ENCODE measurements at regions of chr6 and their contacts with region 1.

Region 1: GRCh38 chr6:32984605-32985389 is 16.4 kb downstream of the BRD2 start:
- DNase-seq: peak; percentile 74
- ATAC-seq: peak; percentile 90
- H3K4me3 Mint-ChIP-seq: no peak overlapping the region
- H3K27ac Mint-ChIP-seq: peak overlapping the region; percentile 73
- H3K4me1 Mint-ChIP-seq: peaks cover 32% of the 10 kb centered on the region
- H3K27me3 Mint-ChIP-seq: no peaks in the 10 kb centered on the region
- CTCF ChIP-seq: no peak

Region 2: GRCh38 chr6:32402812-32403211 is 582.0 kb before region 1 on chr6:
- CTCF ChIA-PET with region 1: no interaction called
- POLR2A ChIA-PET with region 1: no interaction called
- intact Hi-C with region 1: loop called (anchors 5 kb)
- DNase-seq: no peak
- ATAC-seq: no peak
- H3K4me3 Mint-ChIP-seq: no peak overlapping the region
- H3K27ac Mint-ChIP-seq: no peak overlapping the region
- H3K4me1 Mint-ChIP-seq: peaks cover 9% of the 10 kb centered on the region
- H3K27me3 Mint-ChIP-seq: peaks cover 2% of the 10 kb centered on the region
- CTCF ChIP-seq: no peak

Region 3: DNA sequence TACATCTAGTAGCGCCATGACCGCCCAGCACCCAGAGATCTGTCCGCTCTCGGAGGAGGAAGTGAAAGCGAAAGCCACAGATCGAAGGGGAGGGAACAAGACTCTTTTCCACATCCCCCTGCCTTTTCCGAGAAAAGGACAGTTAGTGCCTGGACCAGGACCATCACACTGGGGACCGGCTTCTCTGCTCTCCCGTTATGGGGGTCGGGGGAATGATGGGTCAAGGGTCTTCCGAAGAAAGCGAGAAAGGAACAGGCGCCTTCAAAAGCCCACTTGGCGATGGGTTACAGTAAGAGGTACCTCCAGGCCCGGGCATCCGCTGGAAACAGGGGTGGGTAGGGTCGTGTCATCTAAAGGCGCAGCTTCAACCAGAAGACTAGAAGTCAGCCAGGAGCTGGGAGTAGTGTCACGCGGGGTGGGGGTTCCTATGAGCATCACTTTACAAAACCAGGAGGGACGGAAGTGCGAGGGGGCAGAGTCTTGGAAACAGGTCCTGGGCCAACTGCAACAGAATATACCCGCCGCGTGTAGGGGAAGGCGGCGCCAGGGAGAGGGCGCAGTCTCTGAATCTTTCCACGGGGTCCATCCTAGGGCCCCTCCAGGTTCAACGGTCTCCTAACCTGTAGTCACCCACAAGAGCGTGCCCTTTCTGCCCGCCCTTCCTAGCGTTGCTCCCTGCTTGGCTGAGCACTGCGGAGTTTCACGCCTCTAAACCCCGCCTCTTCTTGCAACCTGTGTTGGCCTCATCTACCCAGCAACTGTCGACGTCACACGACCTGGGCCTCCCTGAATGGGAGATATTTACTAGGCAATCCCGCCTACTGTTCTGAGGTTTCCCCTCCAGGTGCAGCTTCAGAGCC is 140.6 kb before region 1 on chr6 and contains the start of gene PSMB8:
- CTCF ChIA-PET with region 1: interaction called, 23 read pairs
- POLR2A ChIA-PET with region 1: interaction called, 13 read pairs
- intact Hi-C with region 1: no loop called
- DNase-seq: peak; percentile 96
- ATAC-seq: peak; percentile 78
- H3K4me3 Mint-ChIP-seq: peak within 1 kb of the TSS; percentile 99
- H3K27ac Mint-ChIP-seq: peak within 1 kb of the TSS; percentile 100
- H3K4me1 Mint-ChIP-seq: peaks cover 92% of the 10 kb centered on the region
- H3K27me3 Mint-ChIP-seq: no peaks in the 10 kb centered on the region
- CTCF ChIP-seq: no peak
- total RNA-seq, gene PSMB8: 182 and 194 TPM in 2 replicates

Region 4: GRCh38 chr6:32879691-32880090 is 105.1 kb before region 1 on chr6:
- CTCF ChIA-PET with region 1: interaction called, 151 read pairs
- POLR2A ChIA-PET with region 1: interaction called, 21 read pairs
- intact Hi-C with region 1: no loop called
- DNase-seq: no peak
- ATAC-seq: peak; percentile 21
- H3K4me3 Mint-ChIP-seq: peak overlapping the region; percentile 73
- H3K27ac Mint-ChIP-seq: no peak overlapping the region
- H3K4me1 Mint-ChIP-seq: peaks cover 17% of the 10 kb centered on the region
- H3K27me3 Mint-ChIP-seq: peaks cover 4% of the 10 kb centered on the region
- CTCF ChIP-seq: no peak

Region 5: DNA sequence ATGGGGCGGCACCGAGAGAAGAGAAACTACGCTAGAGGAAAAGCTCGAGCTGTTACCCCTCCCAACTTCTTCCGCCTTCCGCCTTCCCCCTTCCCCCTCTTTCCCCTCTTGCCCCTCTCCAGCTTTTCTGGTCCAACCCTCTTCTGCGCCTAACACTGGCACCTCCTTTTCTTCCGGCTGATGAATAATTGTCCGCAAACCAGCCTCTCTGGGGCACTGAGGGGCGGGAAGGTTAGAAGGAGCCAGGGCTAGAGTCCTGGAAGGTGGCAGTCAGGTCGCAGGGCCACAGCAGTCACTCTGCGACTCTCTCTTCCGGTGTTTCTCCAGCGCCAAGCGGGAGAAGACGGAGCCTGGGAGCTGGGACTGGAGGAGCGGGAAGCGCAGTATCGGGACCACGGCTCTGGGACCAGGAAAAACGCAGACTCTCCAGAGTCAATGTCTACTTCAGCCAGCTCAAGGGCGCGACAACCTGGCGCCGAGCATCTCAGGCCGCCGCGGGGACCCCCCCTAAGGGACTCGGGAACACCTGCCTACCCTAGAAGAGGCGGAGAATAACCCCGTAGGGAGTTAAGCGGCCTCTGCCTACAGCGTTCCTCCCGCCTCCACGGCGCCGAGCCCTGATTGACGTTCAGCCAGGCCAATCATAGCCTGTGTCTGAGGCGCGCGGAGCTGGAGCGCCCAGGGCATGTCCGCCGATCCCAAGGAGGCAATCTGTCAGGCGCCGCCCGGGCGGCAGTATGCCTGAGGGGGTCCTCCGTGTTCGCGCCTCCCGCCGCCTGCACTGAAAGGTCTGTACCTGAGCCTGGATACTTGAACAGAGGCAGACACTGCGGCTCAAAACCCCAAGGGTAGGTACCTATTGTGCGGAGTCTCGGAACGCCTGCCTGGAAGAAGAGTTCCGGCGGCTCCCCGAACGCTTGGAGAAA is 90.5 kb before region 1 on chr6:
- CTCF ChIA-PET with region 1: interaction called, 151 read pairs
- POLR2A ChIA-PET with region 1: interaction called, 17 read pairs
- intact Hi-C with region 1: no loop called
- DNase-seq: peak; percentile 96
- ATAC-seq: peak; percentile 97
- H3K4me3 Mint-ChIP-seq: peak overlapping the region; percentile 99
- H3K27ac Mint-ChIP-seq: peak overlapping the region; percentile 97
- H3K4me1 Mint-ChIP-seq: peaks cover 70% of the 10 kb centered on the region
- H3K27me3 Mint-ChIP-seq: no peaks in the 10 kb centered on the region
- CTCF ChIP-seq: no peak

Region 6: DNA sequence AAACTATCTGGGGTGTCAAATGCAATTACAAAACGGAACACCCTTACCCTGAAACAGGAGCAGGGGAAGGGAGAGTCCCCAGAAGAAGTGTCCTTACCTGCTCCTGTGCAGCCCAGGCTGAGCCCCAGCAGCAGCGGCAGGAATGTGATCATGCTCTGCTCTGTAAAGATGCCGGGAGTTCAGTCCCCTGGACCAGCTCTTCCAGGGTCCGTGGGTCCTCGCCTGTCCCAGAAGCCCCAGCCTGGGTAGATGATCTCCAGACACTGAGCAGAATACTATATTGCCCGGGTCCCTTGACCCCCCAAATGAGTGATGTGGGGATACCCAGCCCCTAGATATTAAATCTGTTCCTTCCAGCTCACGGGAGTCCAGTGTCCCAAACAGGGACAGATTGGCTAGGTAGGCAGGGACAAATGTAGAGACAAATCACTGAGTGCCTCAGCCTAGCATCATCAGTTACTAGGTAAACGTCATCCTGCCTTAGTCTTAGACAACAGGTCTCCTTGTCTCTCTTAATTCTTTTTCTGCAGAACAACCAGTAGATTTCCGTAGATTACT is 44.1 kb before region 1 on chr6 and contains the start of gene HLA-DMB:
- CTCF ChIA-PET with region 1: interaction called, 31 read pairs
- POLR2A ChIA-PET with region 1: interaction called, 12 read pairs
- intact Hi-C with region 1: no loop called
- DNase-seq: peak; percentile 53
- ATAC-seq: peak; percentile 60
- H3K4me3 Mint-ChIP-seq: peak within 1 kb of the TSS; percentile 98
- H3K27ac Mint-ChIP-seq: peak within 1 kb of the TSS; percentile 99
- H3K4me1 Mint-ChIP-seq: peaks cover 85% of the 10 kb centered on the region
- H3K27me3 Mint-ChIP-seq: no peaks in the 10 kb centered on the region
- CTCF ChIP-seq: no peak
- total RNA-seq, gene HLA-DMB: 341 and 365 TPM in 2 replicates

Region 7: GRCh38 chr6:32952817-32953739 is 31.7 kb before region 1 on chr6 and contains the start of gene HLA-DMA:
- CTCF ChIA-PET with region 1: interaction called, 90 read pairs
- POLR2A ChIA-PET with region 1: interaction called, 57 read pairs
- intact Hi-C with region 1: loop called (anchors 1 kb)
- DNase-seq: peak; percentile 65
- ATAC-seq: peak; percentile 91
- H3K4me3 Mint-ChIP-seq: peak within 1 kb of the TSS; percentile 98
- H3K27ac Mint-ChIP-seq: peak within 1 kb of the TSS; percentile 97
- H3K4me1 Mint-ChIP-seq: peaks cover 85% of the 10 kb centered on the region
- H3K27me3 Mint-ChIP-seq: no peaks in the 10 kb centered on the region
- CTCF ChIP-seq: no peak
- total RNA-seq, gene HLA-DMA: 371 and 387 TPM in 2 replicates